HEK293 (cell line): ENCODE measurements at regions of chr7 and their contacts with region 1.

Region 1: GRCh38 chr7:140653319-140654108 is 12.9 kb upstream of the DENND2A start:
- H3K4me3 ChIP-seq: no peak overlapping the region
- H3K27ac ChIP-seq: no peak overlapping the region
- H3K4me1 ChIP-seq: no peaks in the 10 kb centered on the region
- CTCF ChIP-seq: peak; percentile 78

Region 2: GRCh38 chr7:140517546-140518369 is 135.8 kb before region 1 on chr7:
- CTCF ChIA-PET with region 1: interaction called, 80 read pairs
- POLR2A ChIA-PET with region 1: no interaction called
- H3K4me3 ChIP-seq: no peak overlapping the region
- H3K27ac ChIP-seq: no peak overlapping the region
- H3K4me1 ChIP-seq: no peaks in the 10 kb centered on the region
- CTCF ChIP-seq: peak; percentile 96

Region 3: GRCh38 chr7:140752533-140752932 is 99.0 kb after region 1 on chr7:
- CTCF ChIA-PET with region 1: no interaction called
- POLR2A ChIA-PET with region 1: no interaction called
- H3K4me3 ChIP-seq: no peak overlapping the region
- H3K27ac ChIP-seq: no peak overlapping the region
- H3K4me1 ChIP-seq: no peaks in the 10 kb centered on the region
- CTCF ChIP-seq: no peak

Region 4: GRCh38 chr7:141551094-141551781 is 897.7 kb after region 1 on chr7 and contains the start of gene AGK:
- CTCF ChIA-PET with region 1: no interaction called
- POLR2A ChIA-PET with region 1: no interaction called
- H3K4me3 ChIP-seq: peak within 1 kb of the TSS; percentile 88
- H3K27ac ChIP-seq: peak within 1 kb of the TSS; percentile 60
- H3K4me1 ChIP-seq: no peaks in the 10 kb centered on the region
- CTCF ChIP-seq: no peak